ENCODE measurements at regions of chr1 and their contacts with region 1.

Region 1: DNA sequence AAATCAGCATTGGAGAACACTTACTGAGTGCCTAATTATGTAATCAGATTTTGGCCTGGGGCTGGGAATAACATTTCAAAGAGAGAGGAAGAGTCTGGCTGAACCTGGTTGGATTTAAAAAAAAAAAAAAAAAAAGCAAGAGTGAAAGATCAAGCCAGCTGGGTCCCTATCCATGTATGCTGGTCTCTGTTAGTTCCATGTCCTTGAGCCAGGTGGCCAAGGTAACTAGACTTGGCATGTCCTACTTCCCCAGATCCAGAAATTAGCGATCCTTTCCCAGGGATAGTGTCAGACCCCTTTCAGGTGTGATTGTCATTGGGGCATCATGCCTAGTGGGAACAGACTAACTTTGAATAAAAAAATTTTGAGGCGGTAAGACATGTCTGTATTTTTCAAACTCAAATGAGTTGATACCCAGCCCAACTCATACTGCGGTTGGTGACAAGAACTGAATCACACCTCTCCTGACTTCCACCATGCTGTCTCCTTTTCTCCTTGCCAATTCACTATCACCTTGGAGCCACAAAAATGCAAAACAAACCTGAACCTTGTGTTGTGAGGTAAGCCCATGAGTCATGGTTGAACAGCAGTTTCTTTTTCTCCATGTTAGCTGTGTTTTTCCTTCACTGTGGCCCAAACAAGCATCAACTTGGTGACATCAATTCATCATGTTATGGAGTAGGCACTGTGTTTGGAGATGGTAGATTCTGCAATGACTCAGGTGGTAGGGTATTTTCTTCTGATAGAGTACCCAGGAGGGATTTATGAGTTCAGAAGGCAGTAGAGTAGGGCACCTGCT is 24.5 kb upstream of the PPP2R5A start:
- DNase-seq: no peak
- H3K4me3 ChIP-seq: no peak overlapping the region
- H3K27ac ChIP-seq: no peak overlapping the region
- H3K4me1 ChIP-seq: no peaks in the 10 kb centered on the region
- H3K27me3 ChIP-seq: peaks cover 0 to 6% of the 10 kb centered on the region in 2 experiments
- CTCF ChIP-seq: no peak
- POLR2A ChIP-seq: no peak

Region 2: GRCh38 chr1:212234431-212235395 is 26.0 kb before region 1 on chr1:
- CTCF ChIA-PET with region 1: no interaction called
- POLR2A ChIA-PET with region 1: interaction called, 10 read pairs
- dilution Hi-C with region 1: no loop called
- intact Hi-C with region 1: no loop called
- DNase-seq: peak; percentile 71
- H3K4me3 ChIP-seq: no peak overlapping the region
- H3K27ac ChIP-seq: no peak overlapping the region
- H3K4me1 ChIP-seq: peaks cover 12% of the 10 kb centered on the region
- H3K27me3 ChIP-seq: peaks cover 2 to 3% of the 10 kb centered on the region in 2 experiments
- CTCF ChIP-seq: no peak
- POLR2A ChIP-seq: no peak

Region 3: GRCh38 chr1:212381397-212382035 is 120.8 kb after region 1 on chr1:
- CTCF ChIA-PET with region 1: no interaction called
- POLR2A ChIA-PET with region 1: no interaction called
- dilution Hi-C with region 1: no loop called
- intact Hi-C with region 1: no loop called
- DNase-seq: no peak
- H3K4me3 ChIP-seq: no peak overlapping the region
- H3K27ac ChIP-seq: no peak overlapping the region
- H3K4me1 ChIP-seq: no peaks in the 10 kb centered on the region
- H3K27me3 ChIP-seq: no peaks in the 10 kb centered on the region
- CTCF ChIP-seq: no peak
- POLR2A ChIP-seq: no peak

Measured in endothelial cell of umbilical vein (primary cell).